ENCODE measurements at regions of chr10 and their contacts with region 1.

Region 1: GRCh38 chr10:46106410-46107255 is 60.6 kb upstream of the MSMB start:
- DNase-seq: peak; percentile 86

Region 2: DNA sequence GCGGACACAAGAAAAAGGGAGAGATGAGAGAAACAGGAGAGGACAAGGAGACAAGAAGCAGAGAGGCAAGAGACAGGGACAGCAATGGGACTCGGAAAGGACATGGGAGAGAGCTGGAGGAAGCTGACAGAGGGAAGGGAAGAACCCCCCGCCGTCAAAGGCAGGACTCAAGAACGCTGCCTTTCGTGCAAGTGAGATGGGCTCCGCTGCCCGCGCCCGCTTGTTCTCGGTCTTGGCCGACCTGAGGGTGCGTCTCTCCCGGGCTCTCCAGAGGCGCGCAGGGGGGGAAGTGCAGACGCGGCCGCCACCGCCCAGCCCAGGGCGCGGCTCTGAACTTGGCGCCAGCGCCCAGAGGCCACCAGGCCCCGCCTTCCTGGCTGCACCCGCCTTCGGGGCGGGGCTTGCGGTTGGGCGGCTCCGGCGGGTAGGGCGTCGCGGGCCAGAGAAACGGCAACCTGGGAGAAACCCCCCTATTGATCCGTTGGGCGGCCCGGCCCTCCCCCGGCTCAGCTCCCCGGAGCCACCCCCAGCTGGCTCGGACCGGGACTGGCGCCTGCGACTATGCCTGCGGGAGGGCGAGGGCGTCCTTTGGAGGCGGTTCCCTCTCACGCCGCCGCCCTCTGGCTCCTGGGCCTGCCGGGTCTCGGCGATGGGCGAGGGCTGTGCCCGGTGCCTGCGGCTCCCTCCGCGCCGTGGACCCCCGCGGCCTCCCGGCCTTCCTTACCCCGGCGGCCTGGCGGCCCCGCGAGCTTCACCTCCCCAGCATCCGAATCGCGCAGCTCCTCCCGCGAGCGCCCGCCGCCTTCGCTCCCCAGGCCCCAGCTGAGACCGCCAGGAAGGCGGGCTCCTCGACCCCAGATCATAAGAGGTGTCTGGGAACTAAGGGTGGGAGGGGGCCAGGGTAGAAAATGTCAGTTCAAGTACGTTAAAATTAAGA is 177.9 kb after region 1 on chr10:
- intact Hi-C with region 1: loop called (anchors 2 kb)
- DNase-seq: peak; percentile 94